ENCODE measurements at regions of chr4 and their contacts with region 1.

Region 1: GRCh38 chr4:86400216-86400615 is 40.4 kb upstream of the MAPK10 start:
- DNase-seq: no peak
- ATAC-seq: no peak
- H3K4me3 ChIP-seq: no peak overlapping the region
- H3K4me3 Mint-ChIP-seq: no peak overlapping the region
- H3K27ac ChIP-seq: no peak overlapping the region
- H3K27ac Mint-ChIP-seq: no peak overlapping the region
- H3K4me1 ChIP-seq: no peaks in the 10 kb centered on the region
- H3K4me1 Mint-ChIP-seq: no peaks in the 10 kb centered on the region
- H3K27me3 ChIP-seq: no peaks in the 10 kb centered on the region
- H3K27me3 Mint-ChIP-seq: peaks cover 0 to 3% of the 10 kb centered on the region in 2 donors

Region 2: DNA sequence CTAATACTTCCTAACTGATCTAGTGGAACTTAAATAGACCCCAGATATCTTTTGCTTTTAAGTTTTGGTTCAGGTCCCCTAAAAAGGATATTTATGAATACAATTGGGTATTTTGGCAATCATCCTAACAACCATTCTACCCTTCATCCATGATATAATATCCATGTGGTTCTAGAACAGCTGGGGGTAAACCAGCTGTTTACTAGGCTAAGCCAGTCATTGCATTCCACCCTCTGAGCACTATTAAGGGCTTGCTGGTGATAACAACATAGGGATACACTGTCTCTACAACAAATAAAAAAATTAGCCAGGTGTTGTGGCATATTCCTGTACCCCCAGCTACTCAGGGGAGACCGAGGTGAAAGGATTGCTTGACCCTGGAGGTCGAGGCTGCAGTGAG is 14.5 kb after region 1 on chr4:
- CTCF ChIA-PET with region 1: interaction called in 1 of 2 experiments, 11 read pairs
- POLR2A ChIA-PET with region 1: interaction called in 1 of 2 experiments, 4 read pairs
- DNase-seq: no peak
- ATAC-seq: no peak
- H3K4me3 ChIP-seq: no peak overlapping the region
- H3K4me3 Mint-ChIP-seq: no peak overlapping the region
- H3K27ac ChIP-seq: no peak overlapping the region
- H3K27ac Mint-ChIP-seq: no peak overlapping the region
- H3K4me1 ChIP-seq: no peaks in the 10 kb centered on the region
- H3K4me1 Mint-ChIP-seq: no peaks in the 10 kb centered on the region
- H3K27me3 ChIP-seq: peaks cover 0 to 5% of the 10 kb centered on the region in 2 experiments
- H3K27me3 Mint-ChIP-seq: peaks cover 2 to 9% of the 10 kb centered on the region in 2 donors

Measured in T-cell (primary cell).